ENCODE measurements at regions of chr12 and their contacts with region 1.

Region 1: GRCh38 chr12:96399919-96400797 is at the start of gene CDK17:
- DNase-seq: peak; percentile 90
- ATAC-seq: peak; percentile 66
- H3K4me3 Mint-ChIP-seq: peak within 1 kb of the TSS; percentile 92
- H3K27ac Mint-ChIP-seq: peak within 1 kb of the TSS; percentile 96
- H3K4me1 Mint-ChIP-seq: peaks cover 35% of the 10 kb centered on the region
- H3K27me3 Mint-ChIP-seq: no peaks in the 10 kb centered on the region
- CTCF ChIP-seq: no peak
- total RNA-seq, gene CDK17: 28.4 to 29.0 TPM

Region 2: DNA sequence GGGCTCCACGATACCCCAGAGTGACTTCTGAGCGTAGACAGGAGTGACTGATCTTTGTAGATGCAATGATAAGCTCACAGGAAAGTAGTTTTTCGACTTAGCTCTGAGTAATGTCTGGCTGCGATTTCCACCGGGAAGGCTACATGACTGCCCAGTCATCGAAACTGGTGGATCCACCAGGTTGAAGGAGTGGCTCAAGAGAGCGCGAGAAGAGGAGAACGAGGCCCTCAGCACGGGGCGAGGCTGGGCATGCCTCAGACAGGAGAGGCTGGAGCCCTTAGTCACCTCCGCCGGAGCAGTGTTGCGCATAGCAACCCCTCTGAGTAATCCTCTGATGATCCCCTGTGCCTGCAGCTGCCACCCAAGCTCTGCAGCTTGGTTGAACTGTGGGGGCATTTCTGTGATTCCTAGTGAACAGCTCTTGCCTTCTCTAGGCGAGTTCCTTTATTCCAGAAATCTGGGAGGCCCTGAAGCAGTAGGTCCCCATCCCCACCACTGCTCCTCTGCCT is 180.4 kb before region 1 on chr12:
- CTCF ChIA-PET with region 1: interaction called, 10 read pairs
- POLR2A ChIA-PET with region 1: interaction called, 3 read pairs
- intact Hi-C with region 1: no loop called
- DNase-seq: no peak
- ATAC-seq: no peak
- H3K4me3 Mint-ChIP-seq: no peak overlapping the region
- H3K27ac Mint-ChIP-seq: peak overlapping the region; percentile 3
- H3K4me1 Mint-ChIP-seq: peaks cover 27% of the 10 kb centered on the region
- H3K27me3 Mint-ChIP-seq: no peaks in the 10 kb centered on the region
- CTCF ChIP-seq: no peak

Region 3: DNA sequence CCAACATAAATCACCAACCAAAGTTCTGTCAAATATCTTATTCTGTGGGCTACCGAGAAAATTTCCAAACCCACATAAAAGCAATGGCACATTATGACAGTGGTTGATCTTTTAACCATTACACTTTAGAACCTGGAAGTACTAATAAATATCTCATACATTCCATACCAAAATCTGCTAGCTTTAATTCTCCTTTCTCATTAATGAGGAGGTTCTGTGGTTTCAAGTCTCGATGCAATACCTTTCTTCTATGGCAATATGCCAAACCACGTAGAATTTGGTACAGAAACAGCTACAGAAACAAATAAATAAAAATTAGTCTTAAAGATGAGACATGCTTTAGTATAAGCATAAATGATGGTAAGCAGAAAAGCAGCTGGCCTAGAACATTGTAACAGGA is 105.3 kb before region 1 on chr12:
- CTCF ChIA-PET with region 1: interaction called, 7 read pairs
- POLR2A ChIA-PET with region 1: interaction called, 8 read pairs
- intact Hi-C with region 1: loop called (anchors 10 kb)
- DNase-seq: no peak
- ATAC-seq: peak; percentile 37
- H3K4me3 Mint-ChIP-seq: no peak overlapping the region
- H3K27ac Mint-ChIP-seq: peak overlapping the region; percentile 38
- H3K4me1 Mint-ChIP-seq: peaks cover 16% of the 10 kb centered on the region
- H3K27me3 Mint-ChIP-seq: no peaks in the 10 kb centered on the region
- CTCF ChIP-seq: no peak

Region 4: DNA sequence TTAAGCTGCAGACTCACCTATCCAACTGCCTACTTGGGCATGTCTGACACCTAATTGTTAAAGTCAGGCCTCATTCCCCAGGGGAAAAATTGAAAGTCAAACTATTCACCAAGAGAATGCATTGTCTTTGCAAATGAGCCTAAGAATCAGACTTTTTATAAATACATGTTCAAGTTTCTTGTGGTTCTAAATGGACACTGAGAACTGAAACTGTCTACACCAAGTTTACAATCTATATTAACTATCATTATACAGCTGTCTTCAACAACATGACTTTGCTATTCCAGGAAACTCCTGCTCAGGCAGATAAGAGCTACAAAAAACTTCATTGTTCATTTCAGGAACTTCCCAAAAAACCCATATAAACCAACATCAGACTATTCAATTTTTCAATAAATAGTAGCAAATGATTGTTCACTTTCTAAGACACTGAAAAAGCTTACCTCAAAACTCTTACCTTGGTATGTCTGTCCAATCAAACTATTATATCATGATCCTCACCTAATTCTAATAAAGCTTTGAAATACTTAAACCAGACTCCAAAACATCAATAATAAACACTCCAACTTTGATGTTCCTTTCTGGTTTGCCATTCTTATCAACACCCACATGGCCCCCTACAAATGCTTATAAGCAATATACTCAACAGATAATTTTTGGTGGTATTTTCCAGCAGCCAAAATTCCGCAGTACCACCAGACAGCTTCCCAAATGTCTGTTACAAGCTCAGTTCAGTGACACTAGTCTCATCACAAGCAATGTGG is 24.1 kb before region 1 on chr12:
- CTCF ChIA-PET with region 1: interaction called, 18 read pairs
- POLR2A ChIA-PET with region 1: interaction called, 14 read pairs
- intact Hi-C with region 1: loop called (anchors 2 kb)
- DNase-seq: no peak
- ATAC-seq: no peak
- H3K4me3 Mint-ChIP-seq: no peak overlapping the region
- H3K27ac Mint-ChIP-seq: peak overlapping the region; percentile 91
- H3K4me1 Mint-ChIP-seq: peaks cover 68% of the 10 kb centered on the region
- H3K27me3 Mint-ChIP-seq: no peaks in the 10 kb centered on the region
- CTCF ChIP-seq: no peak

Region 5: DNA sequence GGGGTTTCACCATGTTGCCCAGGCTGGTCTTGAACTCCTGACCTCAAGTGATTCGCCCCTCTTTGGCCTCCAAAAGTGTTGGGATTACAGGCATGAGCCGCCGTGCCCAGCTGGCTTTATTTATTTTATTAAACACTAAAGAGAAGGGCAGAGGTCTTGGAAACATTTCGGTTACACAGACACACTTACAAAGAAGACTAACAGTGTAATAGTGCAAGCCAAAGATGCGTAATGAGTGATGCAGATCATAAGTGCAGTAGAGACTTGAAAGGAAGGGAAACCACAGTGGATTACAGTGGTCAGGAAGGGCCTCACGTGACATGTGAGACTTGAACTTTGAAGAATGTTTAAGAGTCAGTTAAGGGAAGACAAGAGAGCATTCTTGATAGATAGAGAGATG is 33.9 kb after region 1 on chr12:
- CTCF ChIA-PET with region 1: interaction called, 9 read pairs
- POLR2A ChIA-PET with region 1: interaction called, 6 read pairs
- intact Hi-C with region 1: loop called (anchors 5 kb)
- DNase-seq: peak; percentile 92
- ATAC-seq: peak; percentile 97
- H3K4me3 Mint-ChIP-seq: peak overlapping the region; percentile 2
- H3K27ac Mint-ChIP-seq: peak overlapping the region; percentile 80
- H3K4me1 Mint-ChIP-seq: peaks cover 29% of the 10 kb centered on the region
- H3K27me3 Mint-ChIP-seq: no peaks in the 10 kb centered on the region
- CTCF ChIP-seq: no peak

Region 6: DNA sequence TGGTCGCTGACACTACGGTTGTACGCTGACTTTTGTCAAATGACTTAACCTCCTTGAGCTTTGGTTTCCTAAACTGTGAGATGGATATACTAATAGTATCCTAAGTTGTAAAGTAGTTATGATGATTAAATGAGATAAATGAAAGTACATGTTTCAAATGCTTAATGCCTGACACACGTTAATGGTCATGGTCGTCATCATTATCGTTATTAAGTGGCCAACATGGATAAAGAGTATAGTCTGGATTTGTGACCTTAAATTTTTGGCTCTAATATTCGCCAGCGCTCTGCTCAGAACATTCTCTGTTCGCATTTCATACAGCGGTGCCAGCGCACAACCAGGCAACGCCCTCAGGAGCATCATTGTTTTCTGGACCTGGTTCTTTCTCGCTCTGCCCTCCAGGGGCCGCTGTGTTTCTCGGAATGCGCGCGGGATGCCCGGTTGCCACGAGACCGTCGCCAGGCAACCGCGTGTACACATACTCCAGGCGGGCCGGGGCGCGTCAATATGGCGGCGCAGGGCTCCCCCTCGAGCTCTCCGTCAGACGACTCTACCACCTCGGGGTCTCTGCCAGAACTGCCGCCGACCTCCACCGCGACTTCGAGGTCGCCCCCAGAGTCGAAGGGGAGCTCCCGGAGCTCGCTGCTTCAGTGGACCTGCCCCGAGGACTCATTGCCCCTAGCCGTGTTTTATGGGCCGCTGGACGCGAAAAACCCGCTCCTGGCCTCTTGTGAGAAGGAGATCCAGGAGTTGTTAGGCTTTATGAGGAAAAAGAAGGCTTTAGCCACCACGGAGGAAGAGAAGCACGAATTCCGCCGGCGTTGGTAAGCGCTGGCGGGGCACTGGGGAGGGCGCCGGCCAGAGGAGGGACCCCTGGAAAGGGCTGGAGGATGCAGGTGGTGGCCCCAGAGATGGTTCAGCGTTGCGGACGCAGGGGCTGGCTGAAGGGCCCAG is 89.2 kb after region 1 on chr12 and contains the start of gene CFAP54:
- CTCF ChIA-PET with region 1: interaction called, 15 read pairs
- POLR2A ChIA-PET with region 1: interaction called, 8 read pairs
- intact Hi-C with region 1: loop called (anchors 5 kb)
- DNase-seq: peak; percentile 97
- ATAC-seq: peak; percentile 96
- H3K4me3 Mint-ChIP-seq: peak within 1 kb of the TSS; percentile 84
- H3K27ac Mint-ChIP-seq: peak within 1 kb of the TSS; percentile 53
- H3K4me1 Mint-ChIP-seq: peaks cover 29% of the 10 kb centered on the region
- H3K27me3 Mint-ChIP-seq: no peaks in the 10 kb centered on the region
- CTCF ChIP-seq: peak; percentile 89
- total RNA-seq, gene CFAP54: 0.38 to 0.45 TPM

Region 7: DNA sequence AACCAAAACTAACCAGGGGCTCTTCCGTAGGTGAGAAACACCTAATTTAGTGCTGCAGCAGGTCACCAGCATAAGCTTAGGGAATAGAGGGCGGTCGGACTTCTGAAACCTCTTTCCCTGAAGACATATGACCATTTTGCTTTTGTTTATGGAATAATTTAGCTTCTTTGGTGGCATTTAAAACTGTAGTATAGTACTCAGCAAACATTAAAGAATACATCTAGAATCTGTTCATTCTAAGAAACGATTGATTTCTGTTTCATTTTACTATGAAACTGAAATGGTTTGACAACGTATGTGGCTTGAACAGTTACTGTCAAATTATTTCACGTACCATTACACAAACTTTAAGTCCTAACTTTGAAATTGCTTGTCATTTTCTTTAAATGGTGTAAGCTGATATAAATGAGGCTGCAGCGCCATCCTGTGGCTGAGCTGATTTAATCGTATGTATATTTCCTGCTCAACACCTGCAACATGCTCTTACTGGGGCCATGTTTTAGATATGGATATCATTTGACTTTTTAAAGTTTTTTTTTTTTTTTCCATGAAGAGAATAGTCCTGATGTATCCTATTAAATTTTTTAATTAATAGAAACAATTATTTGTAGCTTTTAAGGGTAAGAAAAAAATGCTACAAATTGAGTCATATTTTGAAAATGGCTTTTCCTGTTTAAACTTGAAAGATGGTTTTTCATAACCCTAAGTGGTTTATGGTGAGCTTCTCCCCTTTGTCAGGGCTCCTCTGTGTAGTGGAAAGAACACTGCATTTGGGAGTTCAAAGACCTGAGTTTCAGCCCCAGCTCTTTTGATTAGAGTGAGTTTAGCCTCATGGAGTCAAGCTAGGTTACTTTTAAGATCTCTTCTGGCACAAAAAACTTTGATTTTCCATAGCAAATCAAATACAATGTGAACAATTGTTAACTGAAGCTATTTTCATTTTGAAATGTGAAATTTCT is 116.6 kb after region 1 on chr12:
- CTCF ChIA-PET with region 1: interaction called, 33 read pairs
- POLR2A ChIA-PET with region 1: interaction called, 15 read pairs
- intact Hi-C with region 1: loop called (anchors 2 kb)
- DNase-seq: peak; percentile 96
- ATAC-seq: peak; percentile 89
- H3K4me3 Mint-ChIP-seq: peak overlapping the region; percentile 35
- H3K27ac Mint-ChIP-seq: peak overlapping the region; percentile 62
- H3K4me1 Mint-ChIP-seq: peaks cover 15% of the 10 kb centered on the region
- H3K27me3 Mint-ChIP-seq: no peaks in the 10 kb centered on the region
- CTCF ChIP-seq: peak; percentile 77

Region 8: DNA sequence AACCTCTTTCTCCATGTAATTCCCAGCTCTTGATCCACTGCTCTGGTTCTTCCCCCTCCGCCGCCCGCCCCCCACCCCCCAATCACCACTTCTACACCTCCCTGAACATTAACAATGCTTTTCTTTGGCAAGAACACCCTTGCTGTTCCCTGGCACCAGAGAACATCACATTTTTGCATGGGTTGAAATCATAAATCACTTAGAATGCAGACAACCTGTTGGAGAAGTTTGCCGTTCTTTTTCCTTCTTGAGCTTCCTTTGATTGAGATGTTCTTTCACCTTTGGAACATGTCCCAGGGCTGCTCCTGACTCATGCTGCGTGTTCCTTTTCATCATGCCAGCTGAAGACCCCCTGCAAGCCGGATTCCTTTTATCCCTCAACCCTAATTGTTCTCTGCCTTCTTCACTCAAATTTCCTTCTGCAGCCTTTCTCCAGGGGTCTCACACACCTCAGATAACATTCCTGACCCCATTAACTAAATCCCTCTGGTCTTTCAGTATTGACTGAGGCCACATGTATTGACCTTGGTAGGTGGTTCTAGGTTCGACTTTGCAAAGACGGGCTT is 1821.2 kb after region 1 on chr12:
- CTCF ChIA-PET with region 1: no interaction called
- POLR2A ChIA-PET with region 1: no interaction called
- intact Hi-C with region 1: no loop called
- DNase-seq: no peak
- ATAC-seq: no peak
- H3K4me3 Mint-ChIP-seq: no peak overlapping the region
- H3K27ac Mint-ChIP-seq: no peak overlapping the region
- H3K4me1 Mint-ChIP-seq: no peaks in the 10 kb centered on the region
- H3K27me3 Mint-ChIP-seq: peaks cover 8% of the 10 kb centered on the region
- CTCF ChIP-seq: no peak

Measured in activated CD8-positive, alpha-beta T cell treated with anti-CD3 and anti-CD28 coated beads for 36 hours (primary cell).